Posterior cingulate gyrus (tissue), 11 donors: ENCODE measurements at regions of chr10 and their contacts with region 1.

Region 1: GRCh38 chr10:88401671-88402347 is 181.3 kb downstream of the RNLS start:
- DNase-seq: no peak

Region 2: GRCh38 chr10:88553116-88553752 is 151.4 kb after region 1 on chr10:
- intact Hi-C with region 1: loop called (anchors 10 kb)
- DNase-seq: peak in 5 of 10 donors; percentile 14 to 62 (median 40)